Vagina (tissue), 2 donors: ENCODE measurements at regions of chr11 and their contacts with region 1.

Region 1: GRCh38 chr11:78645226-78646202 is 70.8 kb upstream of the NARS2 start:
- DNase-seq: peak in 1 of 2 donors; percentile 82
- H3K4me3 ChIP-seq: no peak overlapping the region
- H3K27ac ChIP-seq: no peak overlapping the region
- H3K4me1 ChIP-seq: no peaks in the 10 kb centered on the region
- H3K27me3 ChIP-seq: no peaks in the 10 kb centered on the region
- CTCF ChIP-seq: peak; percentile 82 to 93 (median 87)
- POLR2A ChIP-seq: no peak

Region 2: GRCh38 chr11:78325274-78325781 is 320.2 kb before region 1 on chr11:
- intact Hi-C with region 1: no loop called
- DNase-seq: no peak
- H3K4me3 ChIP-seq: no peak overlapping the region
- H3K27ac ChIP-seq: no peak overlapping the region
- H3K4me1 ChIP-seq: peaks cover under 1% of the 10 kb centered on the region
- H3K27me3 ChIP-seq: no peaks in the 10 kb centered on the region
- CTCF ChIP-seq: no peak
- POLR2A ChIP-seq: no peak

Region 3: DNA sequence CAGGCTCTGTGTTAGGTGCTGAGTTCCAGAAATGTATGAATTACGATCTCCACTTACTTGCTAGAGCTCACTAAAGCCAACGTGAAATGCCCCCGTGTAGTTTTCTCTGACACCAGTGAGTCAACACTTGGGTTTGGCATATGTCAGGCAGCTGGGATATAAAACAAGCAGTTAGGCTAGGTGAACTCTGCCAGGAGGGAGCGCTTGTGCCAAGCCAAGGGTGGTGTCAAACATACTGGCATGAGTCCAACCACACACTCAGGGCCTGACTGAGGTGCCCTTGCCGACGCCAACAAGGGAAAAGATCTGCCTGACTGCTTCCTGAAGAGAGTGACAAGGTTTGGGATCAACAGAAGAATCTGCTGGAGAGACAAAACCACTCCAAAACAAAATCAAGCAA is 96.9 kb after region 1 on chr11:
- intact Hi-C with region 1: no loop called
- DNase-seq: no peak
- H3K4me3 ChIP-seq: no peak overlapping the region
- H3K27ac ChIP-seq: no peak overlapping the region
- H3K4me1 ChIP-seq: peaks cover 26% of the 10 kb centered on the region
- H3K27me3 ChIP-seq: no peaks in the 10 kb centered on the region
- CTCF ChIP-seq: no peak
- POLR2A ChIP-seq: no peak

Region 4: DNA sequence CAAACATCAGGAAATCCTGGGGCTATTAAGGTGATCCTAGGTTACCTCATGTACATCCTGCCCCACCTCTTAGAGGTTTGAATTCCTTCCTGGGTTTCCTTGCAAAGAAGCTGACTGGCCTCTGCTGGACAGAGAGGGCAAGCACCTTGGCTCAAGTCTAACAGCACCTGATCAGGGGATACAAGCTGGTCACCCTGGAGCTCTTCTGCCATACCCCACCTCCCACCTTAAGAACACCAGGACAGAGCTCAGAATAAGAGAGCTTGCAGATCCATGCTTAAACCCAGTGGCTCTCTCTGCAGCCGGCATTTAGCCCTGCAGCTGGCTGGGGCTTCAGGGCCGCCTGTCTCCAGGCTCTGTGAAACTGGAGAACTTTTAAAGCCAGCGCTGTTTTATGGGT is 315.7 kb after region 1 on chr11:
- intact Hi-C with region 1: loop called (anchors 10 kb)
- DNase-seq: no peak
- H3K4me3 ChIP-seq: no peak overlapping the region
- H3K27ac ChIP-seq: no peak overlapping the region
- H3K4me1 ChIP-seq: peaks cover 10% of the 10 kb centered on the region
- H3K27me3 ChIP-seq: no peaks in the 10 kb centered on the region
- CTCF ChIP-seq: no peak
- POLR2A ChIP-seq: no peak

Region 5: DNA sequence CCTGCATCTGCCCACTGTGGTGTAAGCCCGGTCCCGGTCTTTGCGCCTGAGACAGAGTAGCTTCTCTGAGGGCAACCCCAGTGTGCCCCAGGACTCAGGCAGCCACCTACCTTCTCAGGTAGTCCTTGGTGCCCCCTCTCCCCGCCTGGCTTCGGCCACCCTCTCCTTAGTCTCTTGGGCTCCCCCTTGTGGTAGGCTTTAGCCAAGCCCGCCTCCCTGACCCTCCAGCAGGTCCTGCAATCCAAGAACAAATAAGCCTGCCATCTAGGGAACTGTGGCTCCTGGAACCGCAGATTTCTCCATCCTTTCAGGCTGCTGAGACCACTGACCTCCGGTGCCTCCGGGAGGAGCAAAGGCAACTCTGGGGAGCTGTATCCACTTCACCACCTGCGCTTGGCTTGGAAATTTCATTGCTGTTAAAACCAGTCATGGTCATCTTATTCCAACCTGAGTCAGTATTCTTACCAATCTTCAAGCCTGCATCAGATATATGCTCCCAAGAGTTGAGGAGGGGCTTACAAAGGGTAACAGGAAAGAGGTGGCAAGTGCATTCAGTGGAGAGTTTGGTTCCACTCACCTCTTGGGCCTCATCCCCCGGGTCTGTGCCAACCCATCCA is 848.1 kb after region 1 on chr11:
- intact Hi-C with region 1: loop called (anchors 10 kb)
- DNase-seq: no peak
- H3K4me3 ChIP-seq: no peak overlapping the region
- H3K27ac ChIP-seq: no peak overlapping the region
- H3K4me1 ChIP-seq: no peaks in the 10 kb centered on the region
- H3K27me3 ChIP-seq: no peaks in the 10 kb centered on the region
- CTCF ChIP-seq: peak; percentile 16 to 76 (median 54)
- POLR2A ChIP-seq: no peak